ENCODE measurements at regions of chr10 and their contacts with region 1.

Region 1: DNA sequence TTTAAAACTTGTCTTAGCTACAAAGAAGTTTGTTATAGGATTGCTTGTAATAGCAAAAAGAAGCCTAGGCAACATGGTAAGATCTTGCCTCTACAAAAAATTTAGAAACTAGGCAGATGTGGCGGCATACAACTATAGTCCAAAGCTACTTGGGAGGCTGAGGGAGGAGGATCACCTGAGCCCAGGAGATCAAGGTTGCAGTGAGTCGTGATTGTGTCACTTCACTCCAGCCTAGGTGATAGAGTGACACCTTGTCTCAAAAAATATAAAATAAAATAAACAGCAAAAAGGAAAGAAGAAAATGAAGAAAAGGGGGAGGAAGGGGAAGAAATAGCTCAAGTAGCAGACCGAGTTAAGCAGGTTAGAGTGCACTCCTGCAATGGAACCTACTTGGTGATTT is 47.0 kb upstream of the MPP7 start:
- DNase-seq: no peak
- ATAC-seq: no peak
- H3K4me3 ChIP-seq: no peak overlapping the region
- H3K4me3 Mint-ChIP-seq: no peak overlapping the region
- H3K27ac ChIP-seq: no peak overlapping the region
- H3K27ac Mint-ChIP-seq: no peak overlapping the region
- H3K4me1 ChIP-seq: no peaks in the 10 kb centered on the region
- H3K4me1 Mint-ChIP-seq: no peaks in the 10 kb centered on the region
- H3K27me3 ChIP-seq: no peaks in the 10 kb centered on the region
- H3K27me3 Mint-ChIP-seq: no peaks in the 10 kb centered on the region
- CTCF ChIP-seq: no peak

Region 2: DNA sequence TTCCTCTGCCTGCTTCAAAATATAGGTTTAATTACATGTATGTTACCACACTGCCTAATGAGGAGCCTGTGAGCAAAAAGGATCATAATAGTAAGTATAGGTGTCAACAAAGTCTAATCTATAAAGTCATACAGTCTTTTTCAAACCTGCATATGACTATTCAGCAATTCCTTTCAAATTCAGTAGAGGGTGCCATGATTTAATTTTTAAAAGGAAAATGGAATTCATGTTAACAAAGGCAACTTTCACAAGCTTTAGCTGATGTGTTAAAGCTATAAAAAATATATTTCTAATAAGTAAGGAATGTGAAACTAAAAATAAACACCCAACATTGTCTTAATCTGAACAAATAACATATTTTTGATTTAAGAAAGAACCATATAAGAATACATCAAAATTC is 99.1 kb before region 1 on chr10:
- CTCF ChIA-PET with region 1: no interaction called
- POLR2A ChIA-PET with region 1: no interaction called
- intact Hi-C with region 1: no loop called
- DNase-seq: peak in 2 of 9 experiments; percentile 33 to 50
- ATAC-seq: peak; percentile 42
- H3K4me3 ChIP-seq: no peak overlapping the region
- H3K4me3 Mint-ChIP-seq: no peak overlapping the region
- H3K27ac ChIP-seq: no peak overlapping the region
- H3K27ac Mint-ChIP-seq: no peak overlapping the region
- H3K4me1 ChIP-seq: no peaks in the 10 kb centered on the region
- H3K4me1 Mint-ChIP-seq: peaks cover 41% of the 10 kb centered on the region
- H3K27me3 ChIP-seq: no peaks in the 10 kb centered on the region
- H3K27me3 Mint-ChIP-seq: no peaks in the 10 kb centered on the region
- CTCF ChIP-seq: peak; percentile 60

Region 3: GRCh38 chr10:28266449-28267224 is 83.3 kb before region 1 on chr10:
- CTCF ChIA-PET with region 1: no interaction called
- POLR2A ChIA-PET with region 1: no interaction called
- intact Hi-C with region 1: no loop called
- DNase-seq: no peak
- ATAC-seq: no peak
- H3K4me3 ChIP-seq: no peak overlapping the region
- H3K4me3 Mint-ChIP-seq: no peak overlapping the region
- H3K27ac ChIP-seq: no peak overlapping the region
- H3K27ac Mint-ChIP-seq: no peak overlapping the region
- H3K4me1 ChIP-seq: no peaks in the 10 kb centered on the region
- H3K4me1 Mint-ChIP-seq: peaks cover 32% of the 10 kb centered on the region
- H3K27me3 ChIP-seq: no peaks in the 10 kb centered on the region
- H3K27me3 Mint-ChIP-seq: no peaks in the 10 kb centered on the region
- CTCF ChIP-seq: no peak

Region 4: GRCh38 chr10:28367929-28368484 is 18.1 kb after region 1 on chr10:
- CTCF ChIA-PET with region 1: interaction called, 6 read pairs
- POLR2A ChIA-PET with region 1: interaction called, 6 read pairs
- intact Hi-C with region 1: loop called in 1 of 2 experiments (anchors 2 kb)
- DNase-seq: peak; percentile 14 to 91 (median 68)
- ATAC-seq: peak; percentile 92
- H3K4me3 ChIP-seq: peak overlapping the region in 1 of 2 experiments; percentile 1
- H3K4me3 Mint-ChIP-seq: peak overlapping the region; percentile 74
- H3K27ac ChIP-seq: peak overlapping the region; percentile 51 to 77
- H3K27ac Mint-ChIP-seq: peak overlapping the region; percentile 96
- H3K4me1 ChIP-seq: peaks cover 52% of the 10 kb centered on the region
- H3K4me1 Mint-ChIP-seq: peaks cover 52% of the 10 kb centered on the region
- H3K27me3 ChIP-seq: no peaks in the 10 kb centered on the region
- H3K27me3 Mint-ChIP-seq: no peaks in the 10 kb centered on the region
- CTCF ChIP-seq: no peak

Region 5: GRCh38 chr10:28754930-28755718 is 405.2 kb after region 1 on chr10:
- CTCF ChIA-PET with region 1: no interaction called
- POLR2A ChIA-PET with region 1: no interaction called
- intact Hi-C with region 1: no loop called
- DNase-seq: no peak
- ATAC-seq: no peak
- H3K4me3 ChIP-seq: no peak overlapping the region
- H3K4me3 Mint-ChIP-seq: no peak overlapping the region
- H3K27ac ChIP-seq: no peak overlapping the region
- H3K27ac Mint-ChIP-seq: no peak overlapping the region
- H3K4me1 ChIP-seq: no peaks in the 10 kb centered on the region
- H3K4me1 Mint-ChIP-seq: no peaks in the 10 kb centered on the region
- H3K27me3 ChIP-seq: no peaks in the 10 kb centered on the region
- H3K27me3 Mint-ChIP-seq: peaks cover 33% of the 10 kb centered on the region
- CTCF ChIP-seq: no peak

Region 6: GRCh38 chr10:28892816-28893547 is 543.1 kb after region 1 on chr10:
- CTCF ChIA-PET with region 1: no interaction called
- POLR2A ChIA-PET with region 1: no interaction called
- intact Hi-C with region 1: no loop called
- DNase-seq: no peak
- ATAC-seq: no peak
- H3K4me3 ChIP-seq: no peak overlapping the region
- H3K4me3 Mint-ChIP-seq: no peak overlapping the region
- H3K27ac ChIP-seq: no peak overlapping the region
- H3K27ac Mint-ChIP-seq: no peak overlapping the region
- H3K4me1 ChIP-seq: no peaks in the 10 kb centered on the region
- H3K4me1 Mint-ChIP-seq: no peaks in the 10 kb centered on the region
- H3K27me3 ChIP-seq: no peaks in the 10 kb centered on the region
- H3K27me3 Mint-ChIP-seq: no peaks in the 10 kb centered on the region
- CTCF ChIP-seq: no peak